SK-N-SH (cell line): ENCODE measurements at regions of chr7 and their contacts with region 1.

Region 1: GRCh38 chr7:116211006-116211912 is 920 bp downstream of the TES start:
- DNase-seq: peak; percentile 68
- H3K4me3 ChIP-seq: peak overlapping the region; percentile 57 to 61
- H3K27ac ChIP-seq: peak overlapping the region in 1 of 2 experiments; percentile 87; a peak in 2 of 4 replicates
- H3K4me1 ChIP-seq: peaks cover 0 to 30% of the 10 kb centered on the region in 2 experiments; a peak in 2 of 4 replicates
- H3K27me3 ChIP-seq: peaks cover 57% of the 10 kb centered on the region
- CTCF ChIP-seq: no peak
- EP300 ChIP-seq: peak in 1 of 2 experiments; percentile 18; a peak in 1 of 4 replicates
- RAD21 ChIP-seq: no peak

Region 2: DNA sequence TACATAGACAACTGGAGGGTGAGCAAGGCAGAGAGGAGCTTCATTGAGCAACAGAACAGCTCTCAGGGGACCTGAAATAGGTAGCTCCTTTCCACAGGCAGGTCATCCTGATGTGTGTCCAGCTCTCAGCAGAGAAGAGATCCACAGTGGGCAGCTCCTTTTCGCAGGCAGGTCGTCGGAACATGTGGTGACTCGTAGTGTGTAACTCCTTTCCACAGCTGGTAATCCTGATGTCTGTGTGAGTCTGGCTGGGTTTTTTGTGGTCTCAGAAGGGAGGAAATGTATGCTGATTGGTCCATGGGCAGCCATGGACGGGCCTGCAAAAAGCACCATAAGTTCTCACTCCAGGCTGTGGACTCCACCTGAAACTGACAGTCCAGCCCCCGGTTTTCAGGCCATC is 25.3 kb before region 1 on chr7:
- CTCF ChIA-PET with region 1: interaction called, 37 read pairs
- POLR2A ChIA-PET with region 1: no interaction called
- DNase-seq: no peak
- H3K4me3 ChIP-seq: no peak overlapping the region
- H3K27ac ChIP-seq: no peak overlapping the region
- H3K4me1 ChIP-seq: no peaks in the 10 kb centered on the region
- H3K27me3 ChIP-seq: no peaks in the 10 kb centered on the region
- CTCF ChIP-seq: no peak
- EP300 ChIP-seq: no peak
- RAD21 ChIP-seq: no peak

Region 3: GRCh38 chr7:116195451-116195850 is 15.8 kb before region 1 on chr7:
- CTCF ChIA-PET with region 1: interaction called, 20 read pairs
- POLR2A ChIA-PET with region 1: interaction called, 4 read pairs
- DNase-seq: no peak
- H3K4me3 ChIP-seq: no peak overlapping the region
- H3K27ac ChIP-seq: no peak overlapping the region
- H3K4me1 ChIP-seq: no peaks in the 10 kb centered on the region; a peak in 2 of 4 replicates
- H3K27me3 ChIP-seq: peaks cover 14% of the 10 kb centered on the region
- CTCF ChIP-seq: no peak
- EP300 ChIP-seq: no peak
- RAD21 ChIP-seq: no peak

Region 4: DNA sequence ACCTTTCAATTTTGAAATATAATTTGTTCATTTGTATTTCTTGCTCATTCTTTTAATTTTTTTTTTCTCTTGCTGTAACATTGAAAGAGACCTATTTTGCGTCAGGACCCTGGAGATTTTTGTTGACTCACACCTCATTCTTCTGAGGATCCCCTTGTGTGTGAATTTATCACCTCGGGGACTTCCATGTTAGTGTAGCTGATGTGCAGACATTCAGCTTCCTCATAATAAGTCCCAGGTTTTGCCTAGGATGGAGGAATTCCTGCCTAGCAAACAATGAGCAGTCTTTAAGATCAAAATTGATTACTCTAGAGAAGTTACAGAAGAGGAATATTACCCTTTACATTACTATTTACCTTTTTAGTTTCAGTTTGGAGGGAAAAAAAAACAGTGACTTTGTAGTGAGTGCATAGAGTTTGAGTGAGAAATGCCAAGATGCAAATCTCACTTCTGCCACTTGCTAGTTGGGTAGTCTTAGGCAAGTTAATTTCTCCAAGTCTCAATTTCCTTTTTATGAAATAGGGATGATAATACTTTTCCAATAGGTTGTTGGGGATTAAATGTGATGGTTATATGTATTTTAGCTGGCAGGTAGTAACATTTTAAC is 13.3 kb after region 1 on chr7:
- CTCF ChIA-PET with region 1: interaction called, 32 read pairs
- POLR2A ChIA-PET with region 1: interaction called, 7 read pairs
- DNase-seq: no peak
- H3K4me3 ChIP-seq: no peak overlapping the region
- H3K27ac ChIP-seq: peak overlapping the region in 1 of 2 experiments; percentile 39; a peak in 1 of 4 replicates
- H3K4me1 ChIP-seq: peaks cover 26 to 63% of the 10 kb centered on the region in 2 experiments; a peak in 3 of 4 replicates
- H3K27me3 ChIP-seq: peaks cover 10% of the 10 kb centered on the region; the same call in 1 of the 2 replicates
- CTCF ChIP-seq: no peak
- EP300 ChIP-seq: no peak
- RAD21 ChIP-seq: no peak